Calu3 (cell line): ENCODE measurements at regions of chr11 and their contacts with region 1.

Region 1: DNA sequence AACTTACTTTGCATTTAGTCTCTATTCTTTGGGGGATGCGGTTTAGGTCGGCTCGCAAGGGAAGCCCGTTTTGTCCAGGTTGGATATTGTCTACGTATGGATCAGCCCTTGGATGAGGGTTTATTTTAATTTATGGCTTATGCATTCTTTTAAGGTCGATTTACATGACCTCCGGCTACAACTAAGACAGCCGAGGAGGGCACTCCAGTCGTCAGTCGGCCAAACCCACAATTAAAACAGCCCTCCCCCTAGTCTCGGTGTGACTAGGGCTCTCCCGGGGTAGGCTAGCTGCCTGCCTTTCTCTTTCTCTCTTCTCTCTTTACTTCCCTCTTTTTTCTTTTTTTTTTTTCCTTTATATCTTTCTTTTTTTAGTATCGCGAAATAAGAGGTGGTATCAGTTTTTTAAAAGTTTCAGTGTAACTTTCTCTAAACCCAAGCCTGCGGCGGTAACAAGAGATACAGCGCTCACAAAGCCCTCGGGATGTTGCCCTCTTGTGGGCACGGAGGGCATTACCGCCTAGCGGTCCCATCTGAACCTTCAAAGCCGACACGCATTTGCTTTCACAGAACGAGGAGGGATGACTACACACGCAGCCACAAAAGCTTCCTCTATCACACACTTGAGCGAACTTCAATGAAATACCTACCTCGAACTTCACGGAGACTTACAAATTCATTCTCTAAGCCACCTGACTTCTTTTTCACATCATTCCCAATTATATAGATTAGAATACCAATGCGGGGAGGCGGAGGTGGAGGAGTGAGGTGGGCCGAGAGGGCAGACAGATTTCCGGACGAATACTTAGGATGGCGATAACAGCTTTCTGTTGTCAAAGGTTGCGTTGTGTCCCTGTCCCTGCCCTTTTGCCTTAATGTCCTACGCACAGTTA is 132.3 kb upstream of the C11orf58 start:
- DNase-seq: peak; percentile 93
- H3K4me3 Mint-ChIP-seq: no peak overlapping the region
- H3K27ac Mint-ChIP-seq: peak overlapping the region; percentile 51
- H3K4me1 Mint-ChIP-seq: peaks cover 14% of the 10 kb centered on the region
- H3K27me3 Mint-ChIP-seq: peaks cover 2% of the 10 kb centered on the region
- CTCF ChIP-seq: peak; percentile 92

Region 2: GRCh38 chr11:15969281-15969680 is 636.9 kb before region 1 on chr11:
- CTCF ChIA-PET with region 1: no interaction called
- intact Hi-C with region 1: loop called (anchors 5 kb)
- DNase-seq: peak; percentile 56
- H3K4me3 Mint-ChIP-seq: peak overlapping the region; percentile 58
- H3K27ac Mint-ChIP-seq: peak overlapping the region; percentile 93
- H3K4me1 Mint-ChIP-seq: peaks cover 72% of the 10 kb centered on the region
- H3K27me3 Mint-ChIP-seq: no peaks in the 10 kb centered on the region
- CTCF ChIP-seq: no peak

Region 3: GRCh38 chr11:16097543-16097942 is 508.6 kb before region 1 on chr11:
- CTCF ChIA-PET with region 1: no interaction called
- intact Hi-C with region 1: loop called (anchors 5 kb)
- DNase-seq: no peak
- H3K4me3 Mint-ChIP-seq: no peak overlapping the region
- H3K27ac Mint-ChIP-seq: no peak overlapping the region
- H3K4me1 Mint-ChIP-seq: peaks cover 22% of the 10 kb centered on the region
- H3K27me3 Mint-ChIP-seq: no peaks in the 10 kb centered on the region
- CTCF ChIP-seq: no peak

Region 4: GRCh38 chr11:16169956-16170847 is 435.9 kb before region 1 on chr11:
- CTCF ChIA-PET with region 1: no interaction called
- intact Hi-C with region 1: loop called (anchors 5 kb)
- DNase-seq: no peak
- H3K4me3 Mint-ChIP-seq: peak overlapping the region; percentile 26
- H3K27ac Mint-ChIP-seq: peak overlapping the region; percentile 74
- H3K4me1 Mint-ChIP-seq: peaks cover 29% of the 10 kb centered on the region
- H3K27me3 Mint-ChIP-seq: no peaks in the 10 kb centered on the region
- CTCF ChIP-seq: no peak

Region 5: DNA sequence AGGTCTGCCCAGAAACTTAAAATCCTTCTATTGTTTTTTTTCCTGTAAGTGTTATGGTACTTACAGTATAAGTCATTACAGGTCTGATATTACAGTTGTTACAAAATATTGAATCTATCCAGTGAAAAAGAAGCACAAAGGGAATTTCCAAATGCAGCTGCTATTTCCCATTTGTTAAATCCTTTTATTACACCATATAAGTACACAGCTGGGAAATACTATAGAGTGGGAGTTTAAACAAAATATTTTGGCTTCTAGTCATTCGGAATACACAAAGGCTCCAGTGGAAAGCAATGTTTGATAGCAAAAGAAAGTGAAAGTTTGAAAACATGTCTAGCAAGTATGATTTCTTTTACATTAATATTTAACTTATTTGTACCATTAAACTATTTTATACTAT is 267.7 kb before region 1 on chr11:
- CTCF ChIA-PET with region 1: no interaction called
- intact Hi-C with region 1: loop called (anchors 5 kb)
- DNase-seq: no peak
- H3K4me3 Mint-ChIP-seq: no peak overlapping the region
- H3K27ac Mint-ChIP-seq: peak overlapping the region; percentile 74
- H3K4me1 Mint-ChIP-seq: peaks cover 40% of the 10 kb centered on the region
- H3K27me3 Mint-ChIP-seq: no peaks in the 10 kb centered on the region
- CTCF ChIP-seq: no peak

Region 6: DNA sequence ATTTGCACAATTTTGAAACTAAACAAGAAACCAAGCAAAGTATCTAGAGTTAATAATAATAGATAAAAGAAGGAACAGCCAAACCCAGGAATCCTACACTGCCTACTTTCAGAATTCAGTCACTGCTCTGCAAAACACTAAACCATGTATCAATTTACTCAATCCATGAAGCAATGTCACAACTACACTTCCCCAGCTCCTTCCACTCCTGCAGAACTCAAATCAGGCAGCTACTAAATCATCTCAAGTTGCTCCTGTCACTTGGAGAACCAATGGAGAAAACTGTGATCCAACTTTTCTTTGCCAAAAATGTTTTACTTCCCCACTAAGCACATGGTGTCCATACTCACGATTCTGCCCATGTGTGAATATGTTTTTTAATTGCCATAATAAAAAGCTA is 107.5 kb after region 1 on chr11:
- CTCF ChIA-PET with region 1: no interaction called
- intact Hi-C with region 1: no loop called
- DNase-seq: no peak
- H3K4me3 Mint-ChIP-seq: no peak overlapping the region
- H3K27ac Mint-ChIP-seq: no peak overlapping the region
- H3K4me1 Mint-ChIP-seq: no peaks in the 10 kb centered on the region
- H3K27me3 Mint-ChIP-seq: no peaks in the 10 kb centered on the region
- CTCF ChIP-seq: no peak